Right ventricle myocardium superior (tissue), 1 donor: ENCODE measurements at regions of chr5 and their contacts with region 1.

Region 1: GRCh38 chr5:103475629-103476240 is 86.9 kb downstream of the NUDT12 start:
- DNase-seq: no peak
- ATAC-seq: peak; percentile 77

Region 2: GRCh38 chr5:103232393-103232999 is 243.2 kb before region 1 on chr5:
- intact Hi-C with region 1: loop called (anchors 2 kb)
- DNase-seq: no peak
- ATAC-seq: peak; percentile 79

Region 3: DNA sequence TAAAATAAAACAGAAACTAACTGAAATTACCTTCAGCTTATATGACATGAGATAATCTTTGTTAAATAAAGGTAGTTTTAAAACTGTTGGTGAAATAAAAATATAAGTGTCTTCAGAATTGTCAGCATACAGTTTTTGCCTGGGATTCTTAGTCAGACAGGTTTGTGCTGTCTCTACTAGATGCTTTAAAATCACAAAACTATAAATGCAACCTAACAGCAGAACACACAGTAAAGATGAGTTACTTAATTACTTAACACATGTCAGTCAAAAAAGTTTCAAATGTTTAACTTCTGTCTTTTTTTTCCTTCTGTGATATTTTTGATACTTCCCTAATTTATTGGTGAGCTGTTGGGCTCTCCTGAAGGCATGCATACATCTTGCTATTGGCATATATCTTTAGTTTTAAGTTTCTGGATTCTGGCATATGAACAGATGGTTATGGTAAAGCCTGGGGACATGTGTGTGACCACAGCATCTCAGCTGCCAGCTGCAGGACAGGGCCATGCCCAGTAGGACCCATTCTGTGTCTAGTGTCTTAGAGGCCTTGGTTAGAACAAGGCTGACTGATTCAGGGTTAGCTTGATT is 318.0 kb after region 1 on chr5:
- intact Hi-C with region 1: no loop called
- DNase-seq: no peak
- ATAC-seq: no peak